ENCODE measurements at regions of chr17 and their contacts with region 1.

Region 1: GRCh38 chr17:6651357-6651918 is at the starts of genes C17orf100 and MED31:
- ATAC-seq: peak; percentile 85 to 93 (median 90)
- H3K4me3 ChIP-seq: peak within 1 kb of the TSS; percentile 60 to 99 (median 75)
- H3K27ac ChIP-seq: peak within 1 kb of the TSS; percentile 81 to 92
- H3K4me1 ChIP-seq: peaks cover 33 to 38% of the 10 kb centered on the region in 2 donors
- total RNA-seq, gene C17orf100: 0.56 to 8.9 (median 4.3) TPM
- total RNA-seq, gene MED31: 11.7 to 31.8 (median 18.0) TPM

Region 2: DNA sequence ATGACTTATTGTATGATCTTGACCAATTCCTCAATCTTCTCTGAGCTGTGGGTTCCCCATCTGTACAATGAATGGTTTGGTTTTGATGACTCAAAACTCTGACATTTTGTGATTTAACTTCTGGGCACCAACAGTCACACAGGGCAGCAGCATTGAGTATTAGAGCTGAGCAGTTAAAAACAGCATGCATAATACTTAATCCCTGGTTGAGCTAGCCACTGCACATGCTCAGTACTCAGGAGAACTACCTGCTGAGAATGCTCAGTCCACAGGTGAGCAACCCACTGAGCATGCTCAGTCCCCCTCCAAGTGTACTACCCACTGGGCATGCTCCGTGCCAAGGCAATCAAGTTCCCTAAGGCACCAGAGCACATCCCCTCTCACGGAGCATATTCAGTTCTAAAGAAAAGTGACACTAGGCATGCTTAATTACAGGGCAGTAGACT is 285.2 kb before region 1 on chr17:
- in situ Hi-C with region 1: no loop called
- ATAC-seq: no peak
- H3K4me3 ChIP-seq: no peak overlapping the region
- H3K27ac ChIP-seq: no peak overlapping the region
- H3K4me1 ChIP-seq: no peaks in the 10 kb centered on the region

Region 3: GRCh38 chr17:6753006-6753445 is 101.6 kb after region 1 on chr17:
- in situ Hi-C with region 1: no loop called
- ATAC-seq: peak in 5 of 8 experiments; percentile 35 to 98 (median 96)
- H3K4me3 ChIP-seq: no peak overlapping the region
- H3K27ac ChIP-seq: peak overlapping the region in 1 of 2 donors; percentile 44
- H3K4me1 ChIP-seq: peaks cover 0 to 18% of the 10 kb centered on the region in 2 donors

Region 4: DNA sequence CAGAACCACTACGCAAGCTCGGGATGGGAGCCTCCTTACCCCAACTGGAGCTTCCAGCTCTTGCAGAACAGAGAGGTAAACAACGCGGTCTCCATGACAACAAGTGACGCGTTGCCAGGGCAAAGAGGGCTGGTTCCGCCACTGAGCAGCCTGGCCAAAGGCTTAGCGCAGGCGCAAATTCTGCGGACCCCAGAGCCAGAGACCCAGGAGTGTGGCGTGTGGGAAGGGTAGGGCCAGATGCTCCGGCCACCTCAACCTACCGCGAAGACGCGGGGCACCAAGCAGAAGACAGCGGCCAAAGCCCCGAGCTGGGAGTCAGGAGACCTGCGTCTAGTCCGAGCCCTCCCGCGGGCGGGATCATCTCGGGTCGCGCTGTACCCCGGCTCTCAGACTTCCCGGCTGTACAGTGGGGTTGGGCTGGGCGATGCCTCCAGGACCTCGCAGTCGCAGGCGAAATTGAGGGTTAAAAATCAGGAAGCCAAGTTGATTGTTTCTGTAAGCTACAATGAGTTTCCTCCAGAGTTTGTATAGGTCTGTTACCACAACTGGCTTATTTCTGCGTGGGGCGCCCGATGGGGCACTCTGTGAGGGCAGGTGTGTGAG is 180.3 kb after region 1 on chr17 and contains the start of gene TEKT1:
- in situ Hi-C with region 1: loop called in 1 of 9 experiments (anchors 25 kb)
- ATAC-seq: peak; percentile 97 to 100 (median 99)
- H3K4me3 ChIP-seq: peak within 1 kb of the TSS in 4 of 5 donors; percentile 27 to 41 (median 32)
- H3K27ac ChIP-seq: no peak within 1 kb of the TSS
- H3K4me1 ChIP-seq: peaks cover 0 to 9% of the 10 kb centered on the region in 2 donors
- total RNA-seq, gene TEKT1: 0.05 to 17.0 (median 0.17) TPM in 5 of 8 experiments, not detected in the others

Region 5: DNA sequence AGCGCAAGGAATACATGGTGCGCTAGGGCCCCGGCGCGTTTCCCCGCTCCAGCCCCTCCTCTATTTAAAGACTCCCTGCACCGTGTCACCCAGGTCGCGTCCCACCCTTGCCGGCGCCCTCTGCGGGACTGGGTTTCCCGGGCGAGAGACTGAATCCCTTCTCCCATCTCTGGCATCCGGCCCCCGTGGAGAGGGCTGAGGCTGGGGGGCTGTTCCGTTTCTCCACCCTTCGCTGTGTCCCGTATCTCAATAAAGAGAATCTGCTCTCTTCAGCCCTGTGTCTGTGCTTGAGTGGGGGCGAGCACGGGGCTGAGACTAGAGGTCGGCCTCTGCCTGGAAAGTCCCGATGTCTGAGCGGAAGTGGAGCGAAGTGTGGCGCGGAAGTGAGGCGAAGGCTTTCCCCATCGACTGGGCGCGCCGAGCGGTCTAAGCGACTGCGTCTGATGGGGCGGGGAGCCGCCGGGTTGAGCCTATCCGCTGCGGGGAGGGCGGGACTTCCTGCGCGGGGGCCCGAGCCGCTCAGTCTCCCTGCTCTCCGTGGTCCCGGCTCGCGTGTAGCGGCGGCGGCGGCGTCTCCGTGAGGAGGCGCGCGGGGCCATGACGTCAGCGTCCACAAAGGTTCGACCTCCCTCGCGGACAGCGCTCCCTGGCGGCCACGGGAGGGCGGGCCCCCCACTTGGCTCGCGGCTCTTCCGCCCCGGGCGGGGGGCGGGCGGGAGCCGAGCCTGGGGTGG is 363.0 kb after region 1 on chr17:
- in situ Hi-C with region 1: loop called in 2 of 9 experiments (anchors 25 kb)
- ATAC-seq: peak; percentile 80 to 93 (median 91)
- H3K4me3 ChIP-seq: peak overlapping the region; percentile 64 to 88 (median 82)
- H3K27ac ChIP-seq: peak overlapping the region; percentile 87 to 99
- H3K4me1 ChIP-seq: peaks cover 15 to 18% of the 10 kb centered on the region in 2 donors

Measured in motor neuron (in vitro differentiated cells).